Mammary epithelial cell (primary cell): ENCODE measurements at regions of chr4 and their contacts with region 1.

Region 1: DNA sequence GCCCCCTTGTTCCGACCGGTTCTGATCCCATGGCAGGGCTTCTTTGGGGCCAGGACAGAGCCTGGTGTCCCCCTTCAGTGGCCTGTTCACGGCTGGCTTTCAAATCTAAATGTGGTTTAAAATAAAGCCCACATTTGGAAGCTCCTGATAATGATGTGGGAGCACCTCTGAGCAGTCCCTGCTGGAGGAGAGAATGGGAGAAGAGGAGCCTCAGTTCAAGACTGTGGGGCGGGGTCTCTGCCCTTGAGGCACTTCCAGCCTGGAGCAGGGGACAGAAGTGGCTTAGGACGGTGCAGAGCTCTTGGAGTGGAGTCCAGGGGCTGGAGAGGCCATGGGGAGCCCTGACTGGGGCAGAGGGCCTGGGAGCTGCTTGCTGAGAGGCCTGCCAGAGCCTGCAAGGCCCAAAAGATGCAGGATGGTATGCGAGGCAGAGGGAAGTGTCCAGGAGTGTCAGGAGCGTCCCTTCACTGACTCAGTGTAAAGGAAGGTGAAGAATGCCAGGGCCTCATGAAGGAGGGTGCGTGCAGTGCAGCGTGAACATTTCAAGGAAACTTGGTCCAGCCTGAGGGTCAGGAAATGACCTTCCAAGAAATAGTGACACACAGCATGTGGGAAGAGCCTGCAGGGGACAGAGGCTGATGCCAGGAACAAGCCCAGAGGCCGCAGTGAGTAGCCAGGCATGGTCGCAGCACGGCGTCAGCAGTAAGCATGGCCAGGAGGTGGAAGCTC is 21.1 kb upstream of the TADA2B start:
- DNase-seq: peak; percentile 69
- H3K4me3 ChIP-seq: no peak overlapping the region
- H3K27ac ChIP-seq: peak overlapping the region; percentile 74
- H3K4me1 ChIP-seq: peaks cover 29% of the 10 kb centered on the region
- H3K27me3 ChIP-seq: no peaks in the 10 kb centered on the region
- CTCF ChIP-seq: no peak

Region 2: GRCh38 chr4:6986781-6987587 is 35.1 kb before region 1 on chr4:
- CTCF ChIA-PET with region 1: no interaction called
- dilution Hi-C with region 1: loop called (anchors 5 kb)
- in situ Hi-C with region 1: no loop called
- intact Hi-C with region 1: loop called (anchors 1 kb)
- DNase-seq: peak; percentile 93
- H3K4me3 ChIP-seq: peak overlapping the region; percentile 82 to 95 (median 95)
- H3K27ac ChIP-seq: peak overlapping the region; percentile 90
- H3K4me1 ChIP-seq: peaks cover 42% of the 10 kb centered on the region
- H3K27me3 ChIP-seq: no peaks in the 10 kb centered on the region
- CTCF ChIP-seq: peak in 1 of 2 donors; percentile 36

Region 3: GRCh38 chr4:7042697-7043464 is 20.8 kb after region 1 on chr4 and contains the start of gene TADA2B:
- CTCF ChIA-PET with region 1: no interaction called
- dilution Hi-C with region 1: no loop called
- in situ Hi-C with region 1: no loop called
- intact Hi-C with region 1: loop called (anchors 1 kb)
- DNase-seq: peak; percentile 98
- H3K4me3 ChIP-seq: peak within 1 kb of the TSS; percentile 92 to 98 (median 93)
- H3K27ac ChIP-seq: peak within 1 kb of the TSS; percentile 87
- H3K4me1 ChIP-seq: peaks cover 20% of the 10 kb centered on the region
- H3K27me3 ChIP-seq: no peaks in the 10 kb centered on the region
- CTCF ChIP-seq: peak; percentile 23 to 31
- total RNA-seq, gene TADA2B: 13.3 to 17.2 TPM

Region 4: DNA sequence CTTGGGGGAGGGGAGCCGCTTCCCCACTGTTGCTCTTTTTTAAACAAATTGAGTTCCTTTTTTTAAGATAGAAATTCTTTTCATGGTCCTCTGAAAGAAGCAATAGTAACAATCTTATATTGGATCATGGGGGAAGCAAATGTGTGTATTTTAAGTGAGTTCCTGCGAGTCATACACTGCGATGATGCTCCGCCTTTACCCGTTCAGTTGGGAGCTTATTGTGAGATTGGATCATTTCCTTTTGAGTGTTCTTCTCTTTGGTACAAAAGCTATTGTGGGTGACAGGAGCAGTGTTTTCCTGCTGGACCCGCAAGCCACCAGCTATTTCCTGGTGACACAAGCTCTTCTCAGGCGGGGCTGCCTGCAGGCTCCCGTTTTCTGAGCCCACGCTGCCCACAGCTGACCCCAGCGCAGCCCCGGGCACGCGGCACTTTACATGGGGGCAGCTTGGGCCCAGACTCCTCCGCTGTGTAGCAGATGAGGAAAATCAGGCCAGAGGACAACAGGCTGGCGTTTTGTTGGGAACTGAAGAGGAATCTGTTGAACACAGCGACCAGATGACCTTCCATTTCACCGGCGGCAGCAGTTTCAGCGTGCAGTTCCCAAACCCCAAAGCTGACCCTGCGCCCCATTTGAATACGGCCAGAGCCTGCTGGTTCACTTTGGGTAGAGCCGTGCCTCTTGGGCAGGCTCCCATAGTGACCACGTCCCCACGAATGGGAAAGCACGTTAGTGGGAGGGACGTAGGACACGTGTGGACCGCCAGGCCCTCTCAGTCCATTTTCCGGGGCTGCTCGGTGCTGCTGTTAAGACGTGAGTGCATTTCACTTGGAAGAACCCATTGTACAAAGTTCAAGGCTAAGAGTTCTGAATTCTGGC is 33.3 kb after region 1 on chr4:
- CTCF ChIA-PET with region 1: no interaction called
- dilution Hi-C with region 1: loop called (anchors 5 kb)
- in situ Hi-C with region 1: no loop called
- intact Hi-C with region 1: no loop called
- DNase-seq: no peak
- H3K4me3 ChIP-seq: no peak overlapping the region
- H3K27ac ChIP-seq: no peak overlapping the region
- H3K4me1 ChIP-seq: no peaks in the 10 kb centered on the region
- H3K27me3 ChIP-seq: no peaks in the 10 kb centered on the region
- CTCF ChIP-seq: no peak

Region 5: DNA sequence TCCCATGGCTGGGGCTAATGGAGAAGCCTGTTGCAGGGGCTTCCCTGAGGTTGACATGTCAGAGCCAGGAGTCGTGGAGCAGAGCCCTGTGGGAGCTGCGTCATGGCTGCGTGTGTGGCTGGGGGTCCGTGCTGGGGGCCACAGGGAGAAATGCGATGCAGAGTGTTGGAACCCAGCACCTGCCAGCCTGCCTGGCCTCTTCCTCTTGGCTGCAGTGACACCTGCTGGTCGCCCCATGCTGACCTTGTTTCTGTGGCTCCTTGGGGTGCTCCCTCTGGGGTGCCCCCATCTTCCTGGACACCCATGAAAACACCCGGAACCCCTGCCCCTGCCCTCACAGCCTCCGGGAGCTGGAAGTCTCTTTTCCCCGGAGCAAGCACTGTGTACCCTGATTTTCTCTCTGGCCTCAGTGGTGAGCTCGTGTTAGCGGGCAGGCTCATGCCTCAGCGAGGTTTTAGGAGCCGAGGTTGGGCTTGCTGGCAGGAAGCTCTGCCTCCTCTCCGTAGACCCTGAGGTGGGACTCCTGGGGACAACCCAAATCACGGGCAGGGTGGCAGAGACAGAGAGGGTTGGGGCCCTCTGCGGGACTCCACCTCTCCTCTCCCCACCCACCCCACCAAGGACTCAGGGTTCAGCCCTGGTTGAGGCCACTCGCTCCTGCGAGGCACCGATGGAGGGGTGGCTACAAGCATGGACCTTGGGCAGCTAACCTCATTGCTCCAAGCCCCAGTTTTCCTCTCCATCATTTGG is 274.0 kb after region 1 on chr4:
- CTCF ChIA-PET with region 1: no interaction called
- dilution Hi-C with region 1: no loop called
- in situ Hi-C with region 1: no loop called
- intact Hi-C with region 1: no loop called
- DNase-seq: peak; percentile 19
- H3K4me3 ChIP-seq: no peak overlapping the region
- H3K27ac ChIP-seq: no peak overlapping the region
- H3K4me1 ChIP-seq: no peaks in the 10 kb centered on the region
- H3K27me3 ChIP-seq: no peaks in the 10 kb centered on the region
- CTCF ChIP-seq: peak; percentile 54 to 80